ENCODE measurements at regions of chr2 and their contacts with region 1.

Region 1: GRCh38 chr2:10043906-10044601 is 704 bp downstream of the KLF11 start:
- DNase-seq: peak; percentile 98

Region 2: DNA sequence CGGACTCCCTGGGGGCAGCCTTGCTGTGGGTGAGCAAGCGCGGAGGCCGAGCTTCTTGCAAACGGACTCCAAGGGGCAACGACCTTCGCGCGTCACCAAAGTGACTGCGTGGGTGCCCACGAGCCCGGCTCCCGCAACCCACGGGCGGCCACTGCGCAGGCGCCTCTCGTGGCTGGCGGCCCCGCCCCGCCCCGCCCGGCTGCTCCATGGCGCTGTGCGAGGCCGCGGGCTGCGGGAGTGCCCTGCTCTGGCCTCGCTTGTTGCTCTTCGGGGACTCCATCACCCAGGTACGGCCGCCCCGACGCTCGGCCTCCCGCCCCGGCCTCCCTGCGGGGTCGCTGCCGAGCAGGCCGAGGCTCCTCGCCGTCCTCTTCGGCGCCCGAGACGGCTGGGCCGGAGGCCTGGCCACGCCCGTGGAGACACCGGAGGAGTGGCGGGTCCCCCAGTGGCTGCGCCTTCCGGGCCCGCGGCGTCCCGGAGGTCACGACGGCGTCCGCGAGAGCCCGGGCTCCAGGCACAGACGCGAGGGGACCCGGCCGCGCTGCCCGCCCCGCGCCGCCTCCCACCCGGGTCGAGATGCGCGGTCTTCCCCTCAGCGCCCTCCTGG is 569.6 kb before region 1 on chr2 and contains the start of gene IAH1:
- intact Hi-C with region 1: loop called (anchors 10 kb)
- DNase-seq: peak; percentile 88
- total RNA-seq, gene IAH1: 92.0 TPM

Region 3: DNA sequence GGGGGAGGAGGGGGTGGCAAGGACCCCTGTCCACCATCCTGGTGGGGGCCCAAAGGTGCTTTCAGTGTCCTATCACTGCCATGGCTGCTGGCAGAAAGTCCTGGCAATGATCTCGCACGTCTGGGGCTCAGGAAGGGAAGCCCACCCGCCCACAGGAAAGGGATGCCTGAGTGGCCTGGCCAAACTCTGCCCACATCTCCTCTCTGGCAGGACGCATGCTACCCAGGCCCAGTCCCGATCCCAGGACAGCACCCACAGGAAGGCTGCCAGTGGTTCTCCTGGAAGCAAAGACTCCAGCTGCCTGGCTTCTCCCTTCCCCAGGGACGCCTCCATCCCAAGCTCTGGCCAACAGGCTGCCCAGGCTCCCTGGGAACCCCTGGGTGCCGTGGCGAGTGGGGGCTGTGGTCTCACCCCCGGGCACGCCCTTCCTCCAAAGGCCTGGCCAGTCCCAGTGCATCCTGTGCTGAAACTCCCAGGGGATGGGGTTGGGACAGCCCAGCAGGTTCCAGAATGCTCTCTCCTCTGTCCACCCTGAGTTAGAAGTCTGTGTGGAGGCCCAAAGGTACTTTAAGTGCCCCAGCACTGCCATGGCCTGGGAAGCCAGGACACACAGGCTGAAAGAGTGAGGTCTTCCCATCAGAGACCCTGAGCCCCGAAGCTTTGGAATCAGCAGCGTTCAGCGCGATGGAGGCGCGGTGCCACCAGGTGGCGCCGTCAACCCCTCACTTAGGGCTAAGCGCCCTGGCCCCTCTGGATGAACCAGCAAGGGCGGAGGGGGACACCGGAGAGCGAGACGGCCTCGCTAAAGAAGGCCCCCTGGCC is 230.5 kb before region 1 on chr2:
- intact Hi-C with region 1: loop called (anchors 2 kb)
- DNase-seq: no peak

Region 4: GRCh38 chr2:9843229-9844035 is 200.6 kb before region 1 on chr2 and contains the start of gene TAF1B:
- intact Hi-C with region 1: loop called (anchors 10 kb)
- DNase-seq: peak; percentile 93
- total RNA-seq, gene TAF1B: 8.4 TPM

Region 5: DNA sequence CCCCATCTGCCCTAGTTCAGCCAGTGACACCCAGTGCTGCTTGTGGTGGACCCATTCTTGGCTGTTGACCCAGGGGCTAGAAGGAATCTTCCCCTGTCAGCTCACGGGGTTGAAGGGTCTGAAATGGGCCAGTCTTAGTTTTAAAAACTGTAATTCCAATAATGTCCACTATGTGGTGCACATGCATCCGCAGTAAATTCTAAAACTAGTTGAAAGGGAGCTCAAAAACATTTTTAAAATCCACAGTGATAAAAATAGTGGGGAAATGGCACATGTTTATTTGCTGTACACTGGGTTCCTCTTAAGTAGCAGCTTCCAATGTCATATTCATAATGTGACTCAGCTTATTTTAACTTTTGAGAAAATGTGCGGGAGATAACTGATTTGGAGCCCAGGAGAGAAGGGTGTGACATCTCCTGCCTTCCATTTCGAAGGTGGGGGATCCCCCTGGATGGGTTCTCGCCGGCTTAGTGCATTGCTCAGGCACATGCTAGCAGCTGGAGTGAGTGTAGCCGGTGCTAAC is 59.8 kb before region 1 on chr2:
- intact Hi-C with region 1: loop called (anchors 2 kb)
- DNase-seq: peak; percentile 63

Region 6: DNA sequence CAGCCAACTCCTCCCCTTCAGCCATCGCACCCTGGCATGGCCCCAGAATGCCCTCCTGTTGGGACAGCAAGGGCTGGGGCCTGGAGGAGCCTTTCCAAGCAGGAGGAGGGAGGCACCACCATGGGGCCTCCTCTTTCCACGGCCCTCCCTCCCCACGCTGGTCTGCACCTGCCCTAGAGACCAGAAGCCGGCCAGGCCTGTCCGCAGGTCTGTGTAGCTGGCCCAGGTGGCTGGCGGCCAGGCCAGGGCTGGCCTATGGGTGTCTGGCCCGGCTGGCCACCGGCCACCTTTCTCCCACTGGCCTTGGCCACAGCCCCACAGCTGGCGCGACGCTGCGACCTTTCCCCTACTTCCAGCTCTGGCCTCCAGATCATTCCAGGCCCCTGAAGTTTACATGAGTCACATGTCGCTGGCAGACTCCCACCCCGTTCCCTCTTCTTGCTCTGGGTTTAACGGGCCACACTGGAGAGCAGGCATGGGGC is 34.2 kb before region 1 on chr2:
- intact Hi-C with region 1: loop called (anchors 2 kb)
- DNase-seq: peak; percentile 81

Region 7: DNA sequence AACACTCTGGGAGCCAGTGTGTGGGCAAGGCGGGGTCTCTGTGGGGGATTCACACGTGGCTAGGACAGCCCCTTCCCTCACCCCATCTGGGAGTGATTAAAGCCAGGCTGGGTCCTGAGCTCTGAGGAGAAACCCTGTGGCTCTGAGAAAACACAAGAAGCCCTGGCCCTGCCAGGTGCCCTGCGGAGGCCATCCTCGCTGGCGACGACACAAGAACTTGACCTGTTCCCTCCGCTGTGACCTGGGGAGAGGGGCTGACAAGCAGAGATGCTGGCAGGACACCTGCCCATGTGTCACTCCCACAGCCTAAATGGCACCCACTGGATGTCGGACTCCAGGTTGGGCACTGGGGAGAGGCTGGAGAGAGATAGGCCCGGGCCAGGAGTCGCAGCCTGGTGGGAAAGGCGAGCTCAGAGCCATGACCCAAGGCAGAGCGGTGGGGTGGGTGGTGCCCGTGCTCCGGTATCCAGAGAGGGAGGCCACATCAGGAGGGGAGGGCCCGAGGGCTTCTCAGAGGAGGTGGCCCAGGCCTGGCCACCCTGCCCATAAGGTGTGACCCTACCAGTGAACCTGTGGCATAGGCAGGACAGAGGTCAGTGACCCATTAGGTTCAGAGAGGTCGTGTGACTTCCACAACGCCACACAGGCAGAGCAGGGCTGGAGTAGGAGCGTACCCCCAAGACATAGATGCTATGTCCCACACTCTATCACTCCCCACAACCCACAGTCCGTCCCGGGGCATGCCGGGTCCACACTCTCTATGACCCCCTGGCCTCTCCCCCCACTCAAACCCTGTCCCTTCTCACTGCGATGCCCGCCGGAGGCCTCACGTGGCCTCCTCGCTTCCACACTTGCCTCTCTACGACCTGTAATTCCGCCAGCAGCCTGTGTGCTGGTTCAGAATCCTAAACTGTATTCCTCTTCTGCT is 199.2 kb after region 1 on chr2:
- intact Hi-C with region 1: no loop called
- DNase-seq: no peak